CD8-positive, alpha-beta T cell (primary cell): ENCODE measurements at regions of chr7 and their contacts with region 1.

Region 1: GRCh38 chr7:116994611-116995010 is 41.3 kb downstream of the ST7 start:
- DNase-seq: no peak
- ATAC-seq: no peak
- H3K4me3 ChIP-seq: no peak overlapping the region
- H3K4me3 Mint-ChIP-seq: no peak overlapping the region
- H3K27ac ChIP-seq: no peak overlapping the region
- H3K27ac Mint-ChIP-seq: no peak overlapping the region
- H3K4me1 ChIP-seq: no peaks in the 10 kb centered on the region
- H3K4me1 Mint-ChIP-seq: no peaks in the 10 kb centered on the region
- H3K27me3 ChIP-seq: no peaks in the 10 kb centered on the region
- H3K27me3 Mint-ChIP-seq: no peaks in the 10 kb centered on the region
- CTCF ChIP-seq: no peak

Region 2: GRCh38 chr7:116970238-116970910 is 24.2 kb before region 1 on chr7:
- CTCF ChIA-PET with region 1: no interaction called
- POLR2A ChIA-PET with region 1: no interaction called
- intact Hi-C with region 1: no loop called
- DNase-seq: no peak
- ATAC-seq: no peak
- H3K4me3 ChIP-seq: no peak overlapping the region
- H3K4me3 Mint-ChIP-seq: no peak overlapping the region
- H3K27ac ChIP-seq: no peak overlapping the region
- H3K27ac Mint-ChIP-seq: no peak overlapping the region
- H3K4me1 ChIP-seq: no peaks in the 10 kb centered on the region
- H3K4me1 Mint-ChIP-seq: no peaks in the 10 kb centered on the region
- H3K27me3 ChIP-seq: no peaks in the 10 kb centered on the region
- H3K27me3 Mint-ChIP-seq: peaks cover 12% of the 10 kb centered on the region
- CTCF ChIP-seq: no peak

Region 3: DNA sequence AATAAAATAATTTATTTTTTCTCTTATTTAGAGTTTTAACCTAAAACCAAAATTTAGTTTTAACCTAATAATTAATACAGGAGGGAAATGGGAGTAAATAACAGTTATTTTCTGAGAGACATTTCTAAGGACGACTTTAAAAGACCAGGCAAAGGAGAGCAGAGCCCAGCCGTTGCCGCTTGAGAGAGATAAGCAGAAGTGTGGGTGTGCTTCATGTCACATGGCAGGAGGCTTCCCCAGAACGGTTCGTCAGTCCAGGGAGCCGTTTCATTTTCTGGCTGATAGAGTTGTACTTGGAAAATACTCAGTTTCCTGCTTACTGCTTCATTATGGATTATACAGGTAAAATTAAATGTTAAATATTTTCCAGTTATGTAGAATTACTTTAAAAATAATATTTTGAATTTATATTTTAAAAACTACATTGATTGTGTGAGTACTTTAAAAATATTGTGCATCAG is 20.1 kb after region 1 on chr7:
- CTCF ChIA-PET with region 1: interaction called, 160 read pairs
- POLR2A ChIA-PET with region 1: no interaction called
- intact Hi-C with region 1: no loop called
- DNase-seq: peak in 3 of 9 experiments; percentile 13 to 28 (median 24)
- ATAC-seq: no peak
- H3K4me3 ChIP-seq: no peak overlapping the region
- H3K4me3 Mint-ChIP-seq: no peak overlapping the region
- H3K27ac ChIP-seq: no peak overlapping the region
- H3K27ac Mint-ChIP-seq: no peak overlapping the region
- H3K4me1 ChIP-seq: peaks cover 23% of the 10 kb centered on the region
- H3K4me1 Mint-ChIP-seq: peaks cover 40% of the 10 kb centered on the region
- H3K27me3 ChIP-seq: no peaks in the 10 kb centered on the region
- H3K27me3 Mint-ChIP-seq: no peaks in the 10 kb centered on the region
- CTCF ChIP-seq: no peak